ENCODE measurements at regions of chr9 and their contacts with region 1.

Region 1: GRCh38 chr9:4814913-4815312 is 22.2 kb downstream of the RCL1 start:
- DNase-seq: no peak
- ATAC-seq: no peak
- H3K4me3 Mint-ChIP-seq: peak overlapping the region; percentile 5
- H3K27ac Mint-ChIP-seq: peak overlapping the region; percentile 77
- H3K4me1 Mint-ChIP-seq: peaks cover 53% of the 10 kb centered on the region
- H3K27me3 Mint-ChIP-seq: no peaks in the 10 kb centered on the region
- CTCF ChIP-seq: no peak

Region 2: DNA sequence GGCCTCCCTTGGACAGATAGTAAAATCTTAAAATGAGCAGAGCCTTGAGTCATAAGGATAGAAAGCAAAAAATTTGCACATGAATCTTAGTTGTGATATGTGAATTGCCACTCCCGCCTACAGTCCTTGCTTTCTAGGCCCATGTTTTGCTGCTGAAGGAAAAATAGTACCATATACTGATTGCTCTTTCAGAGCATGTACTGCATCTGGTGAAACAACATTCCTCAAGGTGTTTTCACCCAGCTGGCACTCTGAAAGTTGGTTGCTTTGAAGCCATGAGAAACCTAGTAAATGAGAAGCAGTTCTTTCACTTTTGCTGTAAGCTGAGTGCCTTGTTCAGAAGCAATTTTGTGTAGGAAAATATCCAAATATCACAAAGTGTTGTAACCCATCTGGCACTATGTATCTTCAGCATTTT is 125.2 kb before region 1 on chr9:
- CTCF ChIA-PET with region 1: no interaction called
- POLR2A ChIA-PET with region 1: no interaction called
- intact Hi-C with region 1: no loop called
- DNase-seq: no peak
- ATAC-seq: no peak
- H3K4me3 Mint-ChIP-seq: no peak overlapping the region
- H3K27ac Mint-ChIP-seq: no peak overlapping the region
- H3K4me1 Mint-ChIP-seq: peaks cover 8% of the 10 kb centered on the region
- H3K27me3 Mint-ChIP-seq: no peaks in the 10 kb centered on the region
- CTCF ChIP-seq: no peak

Region 3: DNA sequence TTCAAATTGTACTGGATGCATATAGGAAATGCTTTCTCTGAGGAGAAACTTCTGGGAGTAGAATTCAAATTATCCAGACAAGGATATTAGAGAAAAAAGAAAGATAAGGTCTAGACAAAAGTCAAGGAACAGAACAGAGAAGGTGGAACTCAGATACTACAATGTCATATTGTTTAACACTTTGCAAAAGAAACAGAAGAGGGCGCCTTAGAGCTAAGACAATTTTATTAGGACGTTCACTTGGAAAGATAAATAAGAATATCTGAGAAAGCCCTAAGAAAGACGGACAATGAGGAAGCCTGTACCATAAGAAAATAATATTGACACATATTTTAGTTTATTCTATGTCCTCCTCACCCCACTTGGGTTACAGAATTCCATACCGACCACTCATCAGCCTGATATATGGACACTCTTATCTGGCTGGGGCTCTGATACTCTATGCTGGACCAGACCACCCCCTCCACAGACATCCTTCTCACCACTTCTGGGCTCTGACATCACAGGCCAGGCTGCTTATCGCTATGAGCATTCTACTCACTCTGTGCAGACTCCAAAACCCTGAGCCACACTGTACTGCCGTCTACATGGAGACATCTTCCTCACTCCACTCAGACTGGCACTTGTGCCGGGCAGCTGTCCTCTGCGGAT is 64.8 kb before region 1 on chr9:
- CTCF ChIA-PET with region 1: no interaction called
- POLR2A ChIA-PET with region 1: no interaction called
- intact Hi-C with region 1: no loop called
- DNase-seq: no peak
- ATAC-seq: peak; percentile 49
- H3K4me3 Mint-ChIP-seq: no peak overlapping the region
- H3K27ac Mint-ChIP-seq: no peak overlapping the region
- H3K4me1 Mint-ChIP-seq: no peaks in the 10 kb centered on the region
- H3K27me3 Mint-ChIP-seq: no peaks in the 10 kb centered on the region
- CTCF ChIP-seq: peak; percentile 71

Region 4: DNA sequence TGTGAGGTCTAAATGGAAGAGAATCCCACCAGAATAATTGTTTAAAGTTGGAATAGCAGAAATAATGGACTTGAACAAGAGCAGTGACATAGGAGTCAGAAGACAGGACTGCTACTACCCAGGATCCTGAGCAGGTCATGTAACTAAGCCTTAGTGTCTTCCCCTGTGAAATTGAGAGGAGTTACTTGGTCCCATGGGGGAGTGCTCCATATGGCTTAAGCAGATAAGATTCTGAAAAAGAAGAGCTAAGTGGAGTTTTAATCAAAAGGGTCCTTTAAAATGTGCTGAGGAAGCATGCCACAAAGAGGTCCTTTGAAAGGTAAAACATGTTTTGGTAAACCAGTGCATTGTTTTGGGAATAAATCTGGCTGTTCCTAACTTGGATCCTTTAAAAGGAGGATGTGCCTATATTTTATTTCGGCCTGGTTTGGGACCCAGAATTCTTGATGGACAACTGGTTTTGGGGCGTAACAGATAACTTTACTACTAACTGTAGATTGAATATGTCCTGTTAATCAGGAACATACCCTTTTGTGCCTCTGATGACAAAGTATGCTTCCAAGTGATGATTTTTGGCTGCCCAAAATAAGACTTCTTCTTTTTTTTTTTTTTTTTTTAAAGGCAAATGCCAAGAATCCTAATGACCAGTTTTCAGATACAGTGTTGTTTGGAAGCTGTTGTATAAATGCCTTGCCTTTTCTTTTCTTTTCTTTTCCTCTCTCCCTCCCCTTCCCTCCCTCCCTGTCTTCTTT is 16.5 kb before region 1 on chr9:
- CTCF ChIA-PET with region 1: interaction called, 4 read pairs
- POLR2A ChIA-PET with region 1: interaction called, 3 read pairs
- intact Hi-C with region 1: loop called (anchors 2 kb)
- DNase-seq: no peak
- ATAC-seq: no peak
- H3K4me3 Mint-ChIP-seq: no peak overlapping the region
- H3K27ac Mint-ChIP-seq: peak overlapping the region; percentile 78
- H3K4me1 Mint-ChIP-seq: peaks cover 57% of the 10 kb centered on the region
- H3K27me3 Mint-ChIP-seq: no peaks in the 10 kb centered on the region
- CTCF ChIP-seq: no peak

Region 5: GRCh38 chr9:5085993-5086392 is 271.1 kb after region 1 on chr9:
- CTCF ChIA-PET with region 1: no interaction called
- POLR2A ChIA-PET with region 1: no interaction called
- intact Hi-C with region 1: no loop called
- DNase-seq: no peak
- ATAC-seq: no peak
- H3K4me3 Mint-ChIP-seq: no peak overlapping the region
- H3K27ac Mint-ChIP-seq: no peak overlapping the region
- H3K4me1 Mint-ChIP-seq: no peaks in the 10 kb centered on the region
- H3K27me3 Mint-ChIP-seq: no peaks in the 10 kb centered on the region
- CTCF ChIP-seq: no peak